Transverse colon (tissue), 4 donors: ENCODE measurements at regions of chr18 and their contacts with region 1.

Region 1: GRCh38 chr18:58805467-58806187 is 59.0 kb upstream of the ZNF532 start:
- DNase-seq: no peak
- H3K4me3 ChIP-seq: no peak overlapping the region
- H3K27ac ChIP-seq: no peak overlapping the region
- H3K4me1 ChIP-seq: no peaks in the 10 kb centered on the region
- H3K27me3 ChIP-seq: no peaks in the 10 kb centered on the region
- CTCF ChIP-seq: no peak
- EP300 ChIP-seq: no peak
- POLR2A ChIP-seq: no peak

Region 2: DNA sequence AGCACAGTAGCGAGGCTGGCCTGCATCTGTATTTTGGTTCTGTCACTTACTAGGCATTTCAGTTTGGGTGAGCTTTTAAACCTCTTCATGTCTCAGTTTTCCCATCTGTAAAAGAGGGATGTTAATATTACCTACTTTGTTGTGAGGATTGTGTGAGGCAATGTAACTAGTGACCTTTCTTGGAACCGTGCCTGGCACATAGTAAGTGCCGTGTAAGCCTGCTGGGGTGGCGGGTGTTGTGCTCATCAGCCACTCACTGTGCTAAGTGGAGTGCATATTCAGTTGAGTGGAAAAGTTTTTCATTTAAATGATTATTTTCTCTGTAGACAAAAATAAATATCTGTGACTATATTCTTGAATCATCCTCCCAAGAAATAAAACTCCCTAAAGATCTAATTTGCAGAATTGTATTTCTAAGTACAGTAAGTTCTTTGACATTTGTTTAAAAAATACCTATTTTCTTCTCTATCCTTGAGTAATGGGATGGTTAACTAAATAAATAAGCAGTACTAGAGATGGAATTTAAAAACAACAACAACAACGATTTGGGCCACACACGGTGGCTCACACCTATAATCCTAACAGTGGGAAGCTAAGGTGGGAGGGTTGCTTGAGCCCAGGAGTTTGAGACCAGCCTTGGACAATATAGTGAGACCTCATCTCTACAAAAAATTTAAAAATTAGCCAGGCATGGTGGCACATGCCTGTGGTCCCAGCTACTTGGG is 77.7 kb before region 1 on chr18:
- in situ Hi-C with region 1: no loop called
- intact Hi-C with region 1: loop called (anchors 2 kb)
- DNase-seq: no peak
- H3K4me3 ChIP-seq: no peak overlapping the region
- H3K27ac ChIP-seq: no peak overlapping the region
- H3K4me1 ChIP-seq: no peaks in the 10 kb centered on the region
- H3K27me3 ChIP-seq: no peaks in the 10 kb centered on the region
- CTCF ChIP-seq: no peak
- EP300 ChIP-seq: no peak
- POLR2A ChIP-seq: no peak

Region 3: DNA sequence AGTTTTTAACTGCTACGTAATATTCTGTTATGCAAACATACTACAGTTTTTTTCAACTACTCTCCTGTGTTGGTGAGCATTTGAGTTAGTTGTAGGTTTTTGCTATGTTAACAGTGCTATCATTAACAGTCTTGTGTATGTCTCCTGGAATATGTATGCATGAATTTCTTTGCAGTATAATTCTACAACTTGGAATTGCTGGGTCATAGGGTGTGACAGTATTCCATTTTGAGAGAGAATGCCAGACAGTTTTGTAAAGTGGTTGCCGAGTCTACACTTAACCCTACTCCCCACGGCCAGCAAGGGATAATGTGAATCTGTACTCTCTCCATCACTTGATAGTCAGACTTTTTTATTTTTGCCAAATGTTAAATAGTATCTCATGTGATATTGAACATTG is 67.3 kb before region 1 on chr18:
- in situ Hi-C with region 1: no loop called
- intact Hi-C with region 1: no loop called
- DNase-seq: no peak
- H3K4me3 ChIP-seq: no peak overlapping the region
- H3K27ac ChIP-seq: no peak overlapping the region
- H3K4me1 ChIP-seq: no peaks in the 10 kb centered on the region
- H3K27me3 ChIP-seq: no peaks in the 10 kb centered on the region
- CTCF ChIP-seq: no peak
- EP300 ChIP-seq: no peak
- POLR2A ChIP-seq: no peak